B cell (primary cell): ENCODE measurements at regions of chr17 and their contacts with region 1.

Region 1: DNA sequence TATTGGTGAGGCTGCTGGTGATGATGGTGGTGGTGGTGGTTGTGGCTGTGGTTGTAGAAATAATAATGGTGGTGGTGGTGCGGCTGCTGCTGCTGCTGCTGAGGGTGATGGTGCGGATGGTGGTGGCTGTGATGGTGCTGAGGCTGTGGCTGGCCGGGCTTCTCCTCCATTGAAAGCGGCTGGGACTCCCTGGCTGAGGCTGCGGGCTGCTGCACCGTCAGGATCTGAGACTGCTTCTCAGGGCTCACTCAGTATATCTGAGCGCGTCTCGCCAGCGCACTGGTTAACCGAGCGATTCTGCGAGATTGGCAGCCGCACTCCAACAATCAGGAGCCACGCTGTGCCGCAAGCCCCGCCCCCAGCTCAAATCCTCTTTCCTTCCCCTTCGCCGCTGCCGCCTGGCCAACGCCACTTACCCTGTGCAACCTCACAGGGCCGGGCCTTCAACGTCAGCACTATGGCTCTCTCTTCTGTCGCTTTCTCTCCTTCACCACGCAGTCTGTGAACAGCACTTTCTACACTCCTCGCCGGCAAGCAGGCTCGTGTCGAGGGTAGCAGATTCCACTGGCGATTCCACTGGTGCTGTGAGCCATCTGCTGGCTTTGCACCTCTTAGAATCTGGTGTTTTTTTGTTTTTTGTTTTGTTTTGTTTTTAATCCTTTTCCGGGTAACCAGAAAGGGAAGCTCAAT is at the start of gene NUFIP2:
- DNase-seq: peak; percentile 99
- ATAC-seq: peak; percentile 84
- H3K4me3 ChIP-seq: peak within 1 kb of the TSS; percentile 89 to 95 (median 91)
- H3K4me3 Mint-ChIP-seq: peak within 1 kb of the TSS; percentile 97
- H3K27ac ChIP-seq: peak within 1 kb of the TSS; percentile 82 to 94
- H3K27ac Mint-ChIP-seq: peak within 1 kb of the TSS; percentile 97
- H3K4me1 ChIP-seq: peaks cover 30 to 34% of the 10 kb centered on the region in 2 donors
- H3K4me1 Mint-ChIP-seq: peaks cover 30% of the 10 kb centered on the region
- H3K27me3 ChIP-seq: no peaks in the 10 kb centered on the region
- H3K27me3 Mint-ChIP-seq: no peaks in the 10 kb centered on the region
- CTCF ChIP-seq: no peak
- total RNA-seq, gene NUFIP2: 76.5 and 83.5 TPM in 2 replicates

Region 2: DNA sequence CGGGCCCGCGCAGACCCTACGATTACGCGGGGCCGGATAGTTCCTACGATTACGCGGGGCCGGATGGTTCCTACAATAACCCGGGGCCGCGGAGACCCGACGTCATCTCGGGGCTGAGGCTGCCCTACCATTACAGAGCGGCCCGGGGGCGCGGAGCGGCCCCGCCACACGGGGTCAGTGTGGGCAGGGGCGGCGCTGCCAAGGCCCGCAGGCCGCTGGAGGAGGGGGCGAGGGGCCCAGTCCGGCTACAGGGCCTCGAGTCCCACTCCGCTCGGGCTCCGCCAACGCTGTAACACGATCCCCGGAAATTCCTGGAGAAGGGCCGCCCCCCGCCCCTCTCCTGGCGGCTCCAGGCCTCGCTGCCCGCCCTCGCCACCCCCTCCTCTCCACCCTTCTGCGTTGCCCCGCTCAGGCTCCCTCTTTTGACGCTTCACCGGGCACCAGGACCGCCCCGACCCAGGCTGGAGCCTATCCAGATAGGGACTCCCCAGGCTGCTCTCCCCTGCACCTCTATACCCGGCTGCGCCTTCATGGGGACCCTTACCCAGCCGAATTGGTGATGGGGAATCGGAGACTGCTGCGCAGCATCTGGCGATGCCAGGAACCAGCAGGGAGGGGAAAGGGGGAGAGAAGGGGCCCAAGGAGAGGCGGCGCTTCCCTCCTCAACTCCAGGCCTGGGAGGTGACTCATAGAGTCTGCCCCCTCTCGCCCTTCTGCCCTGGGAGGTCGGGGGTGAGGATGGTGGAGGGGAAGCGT is 576.3 kb before region 1 on chr17 and contains the start of gene RAB34:
- CTCF ChIA-PET with region 1: no interaction called
- POLR2A ChIA-PET with region 1: no interaction called
- intact Hi-C with region 1: loop called (anchors 5 kb)
- DNase-seq: peak; percentile 70
- ATAC-seq: peak; percentile 18
- H3K4me3 ChIP-seq: peak within 1 kb of the TSS in 4 of 5 experiments; percentile 46 to 61 (median 52)
- H3K4me3 Mint-ChIP-seq: peak within 1 kb of the TSS; percentile 86
- H3K27ac ChIP-seq: peak within 1 kb of the TSS; percentile 56 to 71
- H3K27ac Mint-ChIP-seq: peak within 1 kb of the TSS; percentile 89
- H3K4me1 ChIP-seq: peaks cover 44 to 57% of the 10 kb centered on the region in 2 donors
- H3K4me1 Mint-ChIP-seq: peaks cover 45% of the 10 kb centered on the region
- H3K27me3 ChIP-seq: peaks cover 0 to 8% (median 2%) of the 10 kb centered on the region in 4 experiments
- H3K27me3 Mint-ChIP-seq: no peaks in the 10 kb centered on the region
- CTCF ChIP-seq: no peak
- total RNA-seq, gene RAB34: 18.0 and 20.5 TPM in 2 replicates

Region 3: DNA sequence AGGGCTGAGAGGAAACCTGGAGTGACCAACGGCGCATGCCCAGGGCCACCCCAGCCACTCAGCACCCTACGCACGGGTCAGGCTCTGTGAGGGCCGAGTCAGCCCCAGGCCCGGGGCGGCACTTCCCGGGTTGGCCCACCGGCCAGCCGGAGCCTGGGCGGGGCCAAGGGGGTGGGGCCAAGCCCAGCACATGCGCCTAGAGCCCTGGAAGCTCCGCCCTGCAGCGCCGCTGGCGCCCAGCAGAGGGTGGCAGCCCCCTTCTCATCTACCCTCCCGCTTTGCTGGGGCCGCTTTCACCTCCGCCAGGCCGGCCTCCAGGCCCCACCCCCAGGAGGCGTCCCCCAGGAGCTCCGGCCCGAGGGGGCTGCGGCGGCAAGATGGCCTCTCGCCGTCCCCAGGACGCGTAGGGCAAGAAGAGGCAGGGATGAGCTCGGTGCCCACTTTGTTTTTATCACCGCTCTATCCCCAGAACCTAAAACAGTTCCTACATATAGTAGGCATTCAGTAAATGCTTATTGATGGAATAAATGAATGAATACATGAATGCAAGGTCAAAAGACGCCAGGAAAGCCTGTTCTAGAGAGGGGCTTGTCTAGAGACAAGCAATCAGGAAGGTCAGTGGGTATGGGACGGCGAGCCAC is 145.1 kb before region 1 on chr17:
- CTCF ChIA-PET with region 1: interaction called, 21 read pairs
- POLR2A ChIA-PET with region 1: interaction called, 13 read pairs
- intact Hi-C with region 1: loop called (anchors 2 kb)
- DNase-seq: peak; percentile 96
- ATAC-seq: peak; percentile 96
- H3K4me3 ChIP-seq: peak overlapping the region; percentile 23 to 65 (median 49)
- H3K4me3 Mint-ChIP-seq: peak overlapping the region; percentile 88
- H3K27ac ChIP-seq: peak overlapping the region; percentile 85 to 88
- H3K27ac Mint-ChIP-seq: peak overlapping the region; percentile 93
- H3K4me1 ChIP-seq: peaks cover 34 to 39% of the 10 kb centered on the region in 2 donors
- H3K4me1 Mint-ChIP-seq: peaks cover 46% of the 10 kb centered on the region
- H3K27me3 ChIP-seq: no peaks in the 10 kb centered on the region
- H3K27me3 Mint-ChIP-seq: no peaks in the 10 kb centered on the region
- CTCF ChIP-seq: peak; percentile 96

Region 4: DNA sequence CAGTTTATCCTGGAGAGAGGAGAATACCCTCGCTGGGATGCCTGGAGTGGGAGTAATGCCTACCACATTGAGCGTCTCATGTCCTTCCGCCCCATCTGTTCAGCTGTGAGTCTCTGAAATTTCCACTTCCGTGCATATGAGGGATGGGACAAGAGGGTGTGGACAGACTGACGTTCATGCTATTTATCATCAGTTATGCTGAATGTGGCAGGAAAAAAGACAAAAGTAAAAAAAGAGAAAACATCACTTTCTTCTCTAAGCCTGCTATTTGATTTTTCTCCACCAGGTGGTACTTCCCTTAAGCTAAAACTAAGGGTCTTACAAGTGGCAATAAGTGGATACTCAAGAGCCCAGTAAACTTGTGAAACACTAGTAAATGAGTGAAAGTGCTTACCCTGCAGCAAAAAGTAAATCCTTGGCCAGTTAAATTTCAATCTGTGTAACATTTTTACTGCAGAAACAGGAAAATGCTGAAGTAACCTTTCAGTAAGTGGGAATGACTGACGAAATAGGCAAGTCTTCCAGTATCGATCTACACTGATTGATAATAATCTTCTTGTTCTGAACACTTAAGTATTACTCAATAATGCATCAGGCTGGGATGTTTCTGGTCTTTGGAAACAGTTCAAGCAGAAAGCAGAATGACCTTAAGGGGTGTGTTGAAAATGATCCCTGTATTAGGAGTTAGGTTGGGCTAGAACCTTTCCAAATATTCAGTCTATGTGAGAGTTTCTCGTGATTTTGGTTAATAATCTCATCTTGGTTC is 41.8 kb before region 1 on chr17:
- CTCF ChIA-PET with region 1: interaction called, 3 read pairs
- POLR2A ChIA-PET with region 1: no interaction called
- intact Hi-C with region 1: loop called (anchors 2 kb)
- DNase-seq: peak; percentile 39
- ATAC-seq: no peak
- H3K4me3 ChIP-seq: no peak overlapping the region
- H3K4me3 Mint-ChIP-seq: no peak overlapping the region
- H3K27ac ChIP-seq: no peak overlapping the region
- H3K27ac Mint-ChIP-seq: no peak overlapping the region
- H3K4me1 ChIP-seq: peaks cover 0 to 11% of the 10 kb centered on the region in 2 donors
- H3K4me1 Mint-ChIP-seq: peaks cover 16% of the 10 kb centered on the region
- H3K27me3 ChIP-seq: no peaks in the 10 kb centered on the region
- H3K27me3 Mint-ChIP-seq: no peaks in the 10 kb centered on the region
- CTCF ChIP-seq: peak; percentile 66

Region 5: GRCh38 chr17:29389982-29390850 is 96.2 kb after region 1 on chr17 and contains the start of gene TAOK1:
- CTCF ChIA-PET with region 1: no interaction called
- POLR2A ChIA-PET with region 1: interaction called, 3 read pairs
- intact Hi-C with region 1: loop called (anchors 1 kb)
- DNase-seq: peak; percentile 98
- ATAC-seq: peak; percentile 95
- H3K4me3 ChIP-seq: peak within 1 kb of the TSS; percentile 65 to 93 (median 76)
- H3K4me3 Mint-ChIP-seq: peak within 1 kb of the TSS; percentile 95
- H3K27ac ChIP-seq: peak within 1 kb of the TSS; percentile 64 to 96
- H3K27ac Mint-ChIP-seq: peak within 1 kb of the TSS; percentile 93
- H3K4me1 ChIP-seq: peaks cover 12 to 27% of the 10 kb centered on the region in 2 donors
- H3K4me1 Mint-ChIP-seq: peaks cover 38% of the 10 kb centered on the region
- H3K27me3 ChIP-seq: no peaks in the 10 kb centered on the region
- H3K27me3 Mint-ChIP-seq: no peaks in the 10 kb centered on the region
- CTCF ChIP-seq: no peak
- total RNA-seq, gene TAOK1: 78.8 and 80.7 TPM in 2 replicates

Region 6: DNA sequence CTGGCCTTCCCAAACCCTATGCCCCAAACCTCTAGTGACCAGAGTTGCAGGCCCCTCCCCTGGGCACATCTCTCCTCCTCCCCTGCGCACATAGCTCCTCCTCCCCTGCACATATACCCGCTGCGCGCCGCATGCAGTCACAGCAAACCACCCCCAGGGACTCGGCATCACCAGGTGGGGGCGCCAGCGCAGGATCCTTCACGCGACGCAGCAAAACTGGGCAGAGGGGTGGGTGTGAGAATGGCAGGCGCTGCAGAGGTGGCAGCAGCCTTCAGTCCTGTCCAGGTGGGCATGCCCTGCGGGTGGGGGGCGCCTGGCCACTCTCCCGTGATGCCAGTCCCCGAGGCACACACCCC is 323.1 kb after region 1 on chr17:
- CTCF ChIA-PET with region 1: interaction called, 4 read pairs
- POLR2A ChIA-PET with region 1: no interaction called
- intact Hi-C with region 1: loop called (anchors 10 kb)
- DNase-seq: peak; percentile 90
- ATAC-seq: peak; percentile 71
- H3K4me3 ChIP-seq: peak overlapping the region in 4 of 5 experiments; percentile 37 to 73 (median 53)
- H3K4me3 Mint-ChIP-seq: peak overlapping the region; percentile 90
- H3K27ac ChIP-seq: no peak overlapping the region
- H3K27ac Mint-ChIP-seq: peak overlapping the region; percentile 64
- H3K4me1 ChIP-seq: peaks cover 56 to 61% of the 10 kb centered on the region in 2 donors
- H3K4me1 Mint-ChIP-seq: peaks cover 47% of the 10 kb centered on the region
- H3K27me3 ChIP-seq: peaks cover 0 to 40% (median 12%) of the 10 kb centered on the region in 4 experiments
- H3K27me3 Mint-ChIP-seq: peaks cover 5% of the 10 kb centered on the region
- CTCF ChIP-seq: peak; percentile 76

Region 7: GRCh38 chr17:30378824-30379302 is 1084.8 kb after region 1 on chr17 and contains the start of gene CPD:
- CTCF ChIA-PET with region 1: no interaction called
- POLR2A ChIA-PET with region 1: no interaction called
- intact Hi-C with region 1: loop called (anchors 5 kb)
- DNase-seq: peak; percentile 96
- ATAC-seq: peak; percentile 97
- H3K4me3 ChIP-seq: peak within 1 kb of the TSS; percentile 62 to 97 (median 77)
- H3K4me3 Mint-ChIP-seq: peak within 1 kb of the TSS; percentile 88
- H3K27ac ChIP-seq: peak within 1 kb of the TSS in 1 of 2 donors; percentile 56
- H3K27ac Mint-ChIP-seq: peak within 1 kb of the TSS; percentile 80
- H3K4me1 ChIP-seq: peaks cover 17 to 19% of the 10 kb centered on the region in 2 donors
- H3K4me1 Mint-ChIP-seq: peaks cover 28% of the 10 kb centered on the region
- H3K27me3 ChIP-seq: peaks cover 0 to 42% (median 41%) of the 10 kb centered on the region in 4 experiments
- H3K27me3 Mint-ChIP-seq: peaks cover 50% of the 10 kb centered on the region
- CTCF ChIP-seq: no peak
- total RNA-seq, gene CPD: 12.5 and 15.6 TPM in 2 replicates